Right cardiac atrium (tissue), 5 donors: ENCODE measurements at regions of chrX and their contacts with region 1.

Region 1: GRCh38 chrX:134969726-134970125 is 21.1 kb upstream of the SMIM10 start:
- DNase-seq: no peak
- ATAC-seq: no peak
- H3K4me3 ChIP-seq: no peak overlapping the region
- H3K27ac ChIP-seq: no peak overlapping the region
- H3K4me1 ChIP-seq: no peaks in the 10 kb centered on the region
- H3K27me3 ChIP-seq: no peaks in the 10 kb centered on the region

Region 2: GRCh38 chrX:134734466-134734952 is 235.2 kb before region 1 on chrX:
- intact Hi-C with region 1: no loop called
- DNase-seq: peak in 1 of 3 donors; percentile 29
- ATAC-seq: no peak
- H3K4me3 ChIP-seq: no peak overlapping the region
- H3K27ac ChIP-seq: no peak overlapping the region
- H3K4me1 ChIP-seq: peaks cover 7% of the 10 kb centered on the region
- H3K27me3 ChIP-seq: no peaks in the 10 kb centered on the region

Region 3: DNA sequence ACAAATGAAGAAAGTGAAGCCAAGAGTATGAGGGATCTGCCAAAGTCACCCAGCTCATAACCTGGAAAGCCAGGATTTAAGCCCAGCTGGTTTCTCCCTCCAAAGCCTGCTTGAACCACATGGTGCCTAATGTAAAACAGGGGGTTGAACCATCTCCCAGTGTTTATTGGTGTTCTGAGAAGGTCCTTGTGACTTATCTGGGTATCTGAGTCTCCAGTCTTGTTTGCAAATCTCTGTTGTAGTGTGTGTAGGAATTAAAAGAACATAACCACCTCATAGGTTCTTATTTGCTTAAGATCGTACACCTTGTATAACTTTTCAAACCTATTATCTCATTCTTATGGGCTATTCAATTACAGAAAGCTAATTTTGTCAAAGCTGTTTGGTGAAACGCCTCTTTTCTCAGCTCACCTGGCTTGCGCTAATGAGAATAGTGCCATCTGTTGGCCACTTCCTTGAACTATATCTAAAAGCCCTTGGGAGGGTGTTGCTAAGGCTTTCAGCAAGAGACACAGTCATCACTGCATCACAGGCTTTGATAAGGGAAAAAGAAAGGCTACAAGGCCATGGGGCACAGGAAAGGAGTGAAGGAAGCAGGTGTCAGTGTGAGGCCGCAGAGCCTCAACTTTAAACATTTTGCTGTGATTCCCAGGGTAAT is 116.6 kb after region 1 on chrX:
- intact Hi-C with region 1: loop called in 1 of 4 experiments (anchors 10 kb)
- DNase-seq: no peak
- ATAC-seq: peak; percentile 56 to 74
- H3K4me3 ChIP-seq: no peak overlapping the region
- H3K27ac ChIP-seq: no peak overlapping the region
- H3K4me1 ChIP-seq: no peaks in the 10 kb centered on the region
- H3K27me3 ChIP-seq: no peaks in the 10 kb centered on the region

Region 4: GRCh38 chrX:135099493-135099783 is 129.7 kb after region 1 on chrX:
- intact Hi-C with region 1: no loop called
- DNase-seq: no peak
- ATAC-seq: no peak
- H3K4me3 ChIP-seq: peak overlapping the region; percentile 67
- H3K27ac ChIP-seq: no peak overlapping the region
- H3K4me1 ChIP-seq: no peaks in the 10 kb centered on the region
- H3K27me3 ChIP-seq: no peaks in the 10 kb centered on the region

Region 5: DNA sequence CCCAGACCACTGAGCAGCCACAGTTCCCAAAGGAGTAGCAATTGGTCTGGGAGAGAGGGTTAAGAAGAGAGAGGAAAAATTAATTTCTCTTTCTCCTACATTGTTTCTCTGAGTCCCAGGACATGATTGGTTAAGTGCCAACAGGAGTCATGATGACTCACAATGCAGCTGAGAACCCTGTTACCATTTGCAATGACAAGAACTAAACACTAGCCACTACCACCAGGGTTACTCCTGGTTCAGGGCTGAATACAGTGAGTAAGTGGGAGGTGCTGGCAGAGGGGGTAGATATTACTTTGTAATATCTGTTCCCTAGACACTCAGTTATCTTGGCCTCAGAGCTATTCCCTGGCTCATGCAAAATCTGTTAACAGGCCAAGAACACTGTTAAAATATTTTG is 357.6 kb after region 1 on chrX:
- intact Hi-C with region 1: no loop called
- DNase-seq: no peak
- ATAC-seq: peak; percentile 70 to 77
- H3K4me3 ChIP-seq: no peak overlapping the region
- H3K27ac ChIP-seq: no peak overlapping the region
- H3K4me1 ChIP-seq: peaks cover 4% of the 10 kb centered on the region
- H3K27me3 ChIP-seq: no peaks in the 10 kb centered on the region